ENCODE measurements at regions of chr16 and their contacts with region 1.

Region 1: DNA sequence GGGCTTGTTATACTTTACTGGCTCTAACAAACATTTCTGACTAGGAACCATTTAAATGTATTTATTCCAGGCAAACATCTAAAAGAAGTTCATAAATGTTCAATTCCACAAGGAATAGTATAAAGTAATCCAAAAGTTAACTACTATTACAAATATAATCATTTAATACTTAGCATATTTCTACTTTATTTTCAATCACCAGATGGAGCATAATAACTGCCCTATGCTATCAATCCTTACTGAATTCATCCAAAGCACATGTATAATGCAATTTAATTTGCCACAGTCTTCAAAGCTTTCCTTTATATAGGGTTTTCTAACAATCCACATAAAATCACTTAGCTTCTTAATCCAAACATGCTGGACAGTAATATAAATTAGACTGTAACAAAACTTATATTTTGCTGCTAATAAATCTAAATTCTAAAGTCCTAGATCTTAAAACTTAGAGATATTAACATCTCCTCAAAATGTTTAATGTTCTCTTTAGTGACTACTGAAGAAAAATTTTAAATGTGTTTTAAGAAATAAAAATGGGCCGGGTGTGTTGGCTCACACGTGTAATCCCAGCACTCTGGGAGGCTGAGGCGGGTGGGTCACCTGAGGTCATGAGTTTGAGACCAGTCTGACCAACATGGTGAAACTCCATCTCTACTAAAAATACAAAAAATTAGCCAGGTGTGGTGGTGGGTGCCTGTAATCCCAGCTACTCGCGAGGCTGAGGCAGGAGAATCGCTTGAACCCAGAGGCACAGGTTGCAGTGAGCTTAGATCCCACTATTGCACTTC is 5.9 kb downstream of the MEIOB start:
- DNase-seq: no peak
- ATAC-seq: no peak
- H3K4me3 ChIP-seq: no peak overlapping the region
- H3K27ac ChIP-seq: no peak overlapping the region
- H3K4me1 ChIP-seq: no peaks in the 10 kb centered on the region
- H3K27me3 ChIP-seq: peaks cover under 1 to 42% of the 10 kb centered on the region in 2 donors
- CTCF ChIP-seq: no peak

Region 2: GRCh38 chr16:1929578-1930337 is 63.7 kb after region 1 on chr16:
- intact Hi-C with region 1: loop called in 1 of 2 experiments (anchors 5 kb)
- DNase-seq: peak; percentile 83 to 99 (median 91)
- ATAC-seq: peak; percentile 99
- H3K4me3 ChIP-seq: peak overlapping the region; percentile 53 to 58
- H3K27ac ChIP-seq: peak overlapping the region in 1 of 2 donors; percentile 88
- H3K4me1 ChIP-seq: peaks cover 0 to 13% of the 10 kb centered on the region in 2 donors
- H3K27me3 ChIP-seq: peaks cover 0 to 17% of the 10 kb centered on the region in 2 donors
- CTCF ChIP-seq: peak; percentile 98 to 100

Measured in left lung (tissue), 14 donors.